ENCODE measurements at regions of chrX and their contacts with region 1.

Region 1: DNA sequence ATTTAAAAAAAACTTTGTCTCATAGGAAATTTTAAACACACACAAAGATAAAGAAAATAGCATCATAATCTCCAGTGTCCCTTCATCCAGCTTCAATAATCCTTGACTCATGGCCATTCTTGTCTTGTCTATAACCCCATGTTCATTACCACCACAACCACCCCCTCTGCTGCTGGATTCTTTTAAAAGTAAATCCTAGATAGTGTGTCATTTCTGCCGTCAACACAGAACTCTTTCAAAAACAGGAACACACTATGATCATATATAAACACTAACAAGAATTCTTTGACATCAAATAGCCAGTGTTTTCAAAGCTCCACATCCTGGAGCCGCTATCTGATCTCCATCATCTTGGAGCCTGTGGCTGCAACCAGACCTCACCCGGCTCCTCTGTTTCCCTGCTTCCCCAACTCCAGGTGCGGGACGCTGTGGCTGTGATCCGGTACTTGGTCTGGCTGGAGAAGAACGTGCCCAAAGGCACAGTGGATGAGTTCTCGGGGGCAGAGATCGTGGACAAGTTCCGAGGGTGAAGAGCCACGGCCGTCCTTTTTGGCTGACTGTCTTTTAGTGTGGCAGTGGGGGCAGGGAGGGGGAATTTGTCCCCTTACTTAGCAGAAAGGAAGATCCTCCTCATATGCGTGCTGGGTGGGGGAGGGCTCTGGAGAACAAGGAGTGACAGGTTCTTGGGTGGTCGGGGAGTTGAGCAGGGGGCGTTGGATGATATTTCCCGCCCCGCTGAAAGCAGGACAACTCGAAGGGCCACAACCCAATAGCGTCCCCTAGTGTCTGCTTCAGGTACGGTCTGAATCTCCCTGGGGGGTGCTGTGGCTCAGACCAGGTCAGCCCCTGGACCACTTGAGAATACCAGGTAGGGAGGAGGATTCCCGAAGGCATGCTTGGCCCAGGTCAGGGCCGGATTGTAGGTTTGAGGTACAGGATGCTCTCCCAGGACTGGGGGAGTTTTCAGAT is 15.6 kb downstream of the XPNPEP2 start:
- DNase-seq: peak; percentile 38
- ATAC-seq: no peak
- H3K4me3 Mint-ChIP-seq: no peak overlapping the region
- H3K27ac Mint-ChIP-seq: no peak overlapping the region
- H3K4me1 Mint-ChIP-seq: peaks cover 43% of the 10 kb centered on the region
- H3K27me3 Mint-ChIP-seq: no peaks in the 10 kb centered on the region
- CTCF ChIP-seq: peak; percentile 61

Region 2: GRCh38 chrX:129798888-129799287 is 44.5 kb after region 1 on chrX:
- CTCF ChIA-PET with region 1: interaction called, 11 read pairs
- POLR2A ChIA-PET with region 1: interaction called, 4 read pairs
- intact Hi-C with region 1: no loop called
- DNase-seq: peak; percentile 71
- ATAC-seq: peak; percentile 85
- H3K4me3 Mint-ChIP-seq: no peak overlapping the region
- H3K27ac Mint-ChIP-seq: peak overlapping the region; percentile 69
- H3K4me1 Mint-ChIP-seq: peaks cover 33% of the 10 kb centered on the region
- H3K27me3 Mint-ChIP-seq: no peaks in the 10 kb centered on the region
- CTCF ChIP-seq: no peak

Measured in activated CD8-positive, alpha-beta T cell treated with anti-CD3 and anti-CD28 coated beads for 36 hours (primary cell).